ENCODE measurements at regions of chr15 and their contacts with region 1.

Region 1: DNA sequence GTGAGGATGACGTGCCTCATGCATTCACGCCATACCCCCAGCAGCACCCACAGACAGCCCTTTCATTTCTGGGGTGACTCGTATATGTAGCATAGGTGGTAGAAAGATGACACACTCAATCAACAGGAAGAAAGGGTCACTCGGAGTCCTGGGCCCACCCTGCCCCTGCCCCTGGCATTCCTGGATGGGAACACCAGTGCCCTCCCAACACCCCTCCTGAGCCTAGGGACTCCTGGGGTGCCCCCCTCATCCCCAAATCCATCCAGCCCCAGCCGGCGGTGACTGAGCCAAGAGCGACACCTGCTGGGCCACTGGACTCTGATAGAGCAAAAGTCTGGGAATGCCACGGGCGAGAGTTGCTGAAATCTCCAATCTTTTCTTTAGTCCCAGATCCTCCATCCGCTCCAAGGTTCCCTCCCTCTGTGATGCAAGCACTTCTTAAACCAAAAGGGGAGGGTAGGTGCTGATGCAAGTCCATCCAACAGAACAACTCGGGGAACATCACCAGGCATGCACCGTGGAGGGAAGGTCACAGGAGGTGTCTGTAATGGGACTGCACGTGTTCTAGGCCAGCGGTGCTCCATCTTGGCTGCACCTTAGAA is 31.1 kb downstream of the ACAN start:
- DNase-seq: peak in 4 of 9 donors; percentile 5 to 26 (median 10)
- ATAC-seq: peak; percentile 25
- H3K4me3 ChIP-seq: no peak overlapping the region
- H3K4me3 Mint-ChIP-seq: no peak overlapping the region
- H3K27ac ChIP-seq: no peak overlapping the region
- H3K27ac Mint-ChIP-seq: no peak overlapping the region
- H3K4me1 ChIP-seq: no peaks in the 10 kb centered on the region
- H3K4me1 Mint-ChIP-seq: peaks cover 0 to 5% (median 0%) of the 10 kb centered on the region in 7 donors
- H3K27me3 ChIP-seq: no peaks in the 10 kb centered on the region
- H3K27me3 Mint-ChIP-seq: peaks cover 0 to 12% (median 0%) of the 10 kb centered on the region in 5 donors

Region 2: GRCh38 chr15:88476635-88477060 is 357.7 kb before region 1 on chr15:
- CTCF ChIA-PET with region 1: no interaction called
- POLR2A ChIA-PET with region 1: no interaction called
- intact Hi-C with region 1: loop called in 1 of 2 experiments (anchors 2 kb)
- DNase-seq: peak in 5 of 9 donors; percentile 22 to 45 (median 40)
- ATAC-seq: peak; percentile 55
- H3K4me3 ChIP-seq: no peak overlapping the region
- H3K4me3 Mint-ChIP-seq: no peak overlapping the region
- H3K27ac ChIP-seq: no peak overlapping the region
- H3K27ac Mint-ChIP-seq: no peak overlapping the region
- H3K4me1 ChIP-seq: no peaks in the 10 kb centered on the region
- H3K4me1 Mint-ChIP-seq: peaks cover 0 to 6% (median 0%) of the 10 kb centered on the region in 7 donors
- H3K27me3 ChIP-seq: no peaks in the 10 kb centered on the region
- H3K27me3 Mint-ChIP-seq: no peaks in the 10 kb centered on the region

Region 3: GRCh38 chr15:88818920-88819319 is 15.4 kb before region 1 on chr15:
- CTCF ChIA-PET with region 1: no interaction called
- POLR2A ChIA-PET with region 1: no interaction called
- intact Hi-C with region 1: no loop called
- DNase-seq: no peak
- ATAC-seq: no peak
- H3K4me3 ChIP-seq: no peak overlapping the region
- H3K4me3 Mint-ChIP-seq: no peak overlapping the region
- H3K27ac ChIP-seq: no peak overlapping the region
- H3K27ac Mint-ChIP-seq: no peak overlapping the region
- H3K4me1 ChIP-seq: no peaks in the 10 kb centered on the region
- H3K4me1 Mint-ChIP-seq: no peaks in the 10 kb centered on the region
- H3K27me3 ChIP-seq: no peaks in the 10 kb centered on the region
- H3K27me3 Mint-ChIP-seq: peaks cover 0 to 19% (median 11%) of the 10 kb centered on the region in 5 donors

Measured in naive thymus-derived CD4-positive, alpha-beta T cell (primary cell).